ENCODE measurements at regions of chr2 and their contacts with region 1.

Region 1: DNA sequence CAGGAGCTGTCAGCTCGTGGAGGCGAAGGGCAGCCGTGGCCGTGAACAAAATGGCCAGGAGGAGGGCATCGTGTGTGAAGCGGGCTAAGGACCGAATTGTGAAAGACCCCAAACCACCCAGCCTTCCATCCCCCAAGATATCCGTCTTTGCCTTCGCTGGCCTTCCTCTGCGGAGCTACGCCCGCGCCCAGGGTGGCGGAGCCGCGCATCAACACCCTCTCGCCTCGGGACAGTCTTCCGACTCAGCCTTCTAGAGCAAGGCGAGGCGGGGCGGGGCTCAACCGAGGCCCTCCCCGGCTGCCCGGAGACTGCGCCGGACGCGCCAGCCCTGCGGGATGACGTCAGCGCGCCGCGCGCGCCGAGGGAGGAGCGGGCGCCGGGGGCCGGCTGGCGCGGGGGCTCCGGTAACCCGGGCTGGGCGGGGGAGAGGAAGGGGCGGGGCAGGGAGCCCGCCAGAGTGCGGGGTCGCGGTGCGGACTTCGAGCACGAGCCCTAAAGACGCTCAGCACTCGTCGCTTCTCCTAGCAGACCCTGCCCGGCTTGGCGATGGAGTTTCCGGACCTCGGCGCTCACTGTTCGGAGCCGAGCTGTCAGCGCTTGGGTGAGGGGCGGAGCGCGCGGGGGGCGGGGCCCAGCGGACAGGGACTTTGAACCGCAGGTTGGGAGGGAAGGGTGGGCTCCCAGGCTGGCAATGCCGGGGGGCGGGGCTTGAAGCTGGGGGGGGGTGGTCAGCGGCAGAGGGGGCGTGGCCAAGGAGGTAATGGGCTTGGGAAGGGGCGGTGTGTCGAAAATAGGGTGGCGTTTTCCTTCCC is at the start of gene ZFAND2B:
- DNase-seq: peak; percentile 93
- H3K4me3 Mint-ChIP-seq: peak within 1 kb of the TSS; percentile 88
- H3K27ac Mint-ChIP-seq: peak within 1 kb of the TSS; percentile 94
- H3K4me1 Mint-ChIP-seq: peaks cover 15% of the 10 kb centered on the region
- H3K27me3 Mint-ChIP-seq: no peaks in the 10 kb centered on the region
- CTCF ChIP-seq: no peak
- total RNA-seq, gene ZFAND2B: 61.0 and 73.1 TPM in 2 replicates

Region 2: GRCh38 chr2:219057709-219058540 is 148.7 kb before region 1 on chr2:
- CTCF ChIA-PET with region 1: no interaction called
- POLR2A ChIA-PET with region 1: no interaction called
- intact Hi-C with region 1: no loop called
- DNase-seq: peak; percentile 51
- H3K4me3 Mint-ChIP-seq: no peak overlapping the region
- H3K27ac Mint-ChIP-seq: no peak overlapping the region
- H3K4me1 Mint-ChIP-seq: no peaks in the 10 kb centered on the region
- H3K27me3 Mint-ChIP-seq: peaks cover 63% of the 10 kb centered on the region
- CTCF ChIP-seq: peak; percentile 95

Region 3: DNA sequence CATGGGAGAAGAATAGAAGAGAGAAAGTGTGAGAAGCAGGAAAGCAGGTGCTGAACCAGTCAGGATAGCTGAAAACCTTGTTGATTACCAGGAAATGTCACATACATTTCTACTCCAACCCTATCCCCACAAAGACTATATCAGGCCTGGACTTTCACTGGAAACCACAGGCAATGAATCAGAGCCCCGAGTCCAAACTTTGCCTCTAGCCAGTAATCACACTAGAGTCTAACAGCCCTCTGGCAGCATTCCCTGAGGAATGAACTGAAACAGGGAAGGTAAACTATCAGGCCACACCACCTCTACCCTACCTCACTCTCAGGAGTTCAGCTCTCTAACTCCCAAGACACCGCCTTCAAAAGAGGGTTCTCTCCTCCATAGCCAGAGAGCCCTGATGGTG is 127.2 kb before region 1 on chr2:
- CTCF ChIA-PET with region 1: no interaction called
- POLR2A ChIA-PET with region 1: no interaction called
- intact Hi-C with region 1: no loop called
- DNase-seq: peak; percentile 8
- H3K4me3 Mint-ChIP-seq: no peak overlapping the region
- H3K27ac Mint-ChIP-seq: no peak overlapping the region
- H3K4me1 Mint-ChIP-seq: no peaks in the 10 kb centered on the region
- H3K27me3 Mint-ChIP-seq: no peaks in the 10 kb centered on the region
- CTCF ChIP-seq: no peak

Region 4: DNA sequence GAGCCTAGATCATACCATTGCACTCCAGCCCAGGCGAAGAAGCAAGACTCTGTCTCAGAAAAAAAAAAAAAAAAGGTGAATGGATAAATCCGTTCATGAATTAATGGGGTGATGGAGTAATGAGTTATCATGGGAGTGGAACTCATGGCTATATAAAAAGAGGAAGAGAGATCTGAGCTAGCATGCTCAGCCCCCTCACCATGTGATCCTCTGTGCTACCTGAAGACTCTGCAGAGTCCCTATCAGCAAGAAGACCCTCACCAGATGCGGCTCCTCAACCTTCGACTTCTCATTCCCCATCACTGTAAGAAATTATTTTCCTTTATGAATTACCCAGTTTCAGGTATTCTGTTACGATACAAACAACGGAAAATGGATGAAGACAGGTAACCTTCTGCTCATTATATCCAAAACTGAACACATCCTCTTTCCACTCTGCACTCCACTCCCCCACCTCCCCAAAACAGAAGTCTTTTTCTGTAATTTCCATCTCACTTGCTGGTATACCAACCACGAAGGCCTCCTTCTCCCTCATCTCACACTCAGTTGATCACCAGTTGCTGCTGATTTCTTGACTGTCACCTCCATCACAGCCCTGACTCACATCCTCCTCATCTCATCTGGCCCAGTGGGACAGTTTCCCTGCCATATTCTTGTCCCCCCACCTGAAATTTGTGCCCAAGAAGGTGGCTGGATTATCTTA is 19.7 kb before region 1 on chr2:
- CTCF ChIA-PET with region 1: no interaction called
- POLR2A ChIA-PET with region 1: interaction called, 35 read pairs
- intact Hi-C with region 1: no loop called
- DNase-seq: no peak
- H3K4me3 Mint-ChIP-seq: no peak overlapping the region
- H3K27ac Mint-ChIP-seq: no peak overlapping the region
- H3K4me1 Mint-ChIP-seq: no peaks in the 10 kb centered on the region
- H3K27me3 Mint-ChIP-seq: no peaks in the 10 kb centered on the region
- CTCF ChIP-seq: no peak

Region 5: DNA sequence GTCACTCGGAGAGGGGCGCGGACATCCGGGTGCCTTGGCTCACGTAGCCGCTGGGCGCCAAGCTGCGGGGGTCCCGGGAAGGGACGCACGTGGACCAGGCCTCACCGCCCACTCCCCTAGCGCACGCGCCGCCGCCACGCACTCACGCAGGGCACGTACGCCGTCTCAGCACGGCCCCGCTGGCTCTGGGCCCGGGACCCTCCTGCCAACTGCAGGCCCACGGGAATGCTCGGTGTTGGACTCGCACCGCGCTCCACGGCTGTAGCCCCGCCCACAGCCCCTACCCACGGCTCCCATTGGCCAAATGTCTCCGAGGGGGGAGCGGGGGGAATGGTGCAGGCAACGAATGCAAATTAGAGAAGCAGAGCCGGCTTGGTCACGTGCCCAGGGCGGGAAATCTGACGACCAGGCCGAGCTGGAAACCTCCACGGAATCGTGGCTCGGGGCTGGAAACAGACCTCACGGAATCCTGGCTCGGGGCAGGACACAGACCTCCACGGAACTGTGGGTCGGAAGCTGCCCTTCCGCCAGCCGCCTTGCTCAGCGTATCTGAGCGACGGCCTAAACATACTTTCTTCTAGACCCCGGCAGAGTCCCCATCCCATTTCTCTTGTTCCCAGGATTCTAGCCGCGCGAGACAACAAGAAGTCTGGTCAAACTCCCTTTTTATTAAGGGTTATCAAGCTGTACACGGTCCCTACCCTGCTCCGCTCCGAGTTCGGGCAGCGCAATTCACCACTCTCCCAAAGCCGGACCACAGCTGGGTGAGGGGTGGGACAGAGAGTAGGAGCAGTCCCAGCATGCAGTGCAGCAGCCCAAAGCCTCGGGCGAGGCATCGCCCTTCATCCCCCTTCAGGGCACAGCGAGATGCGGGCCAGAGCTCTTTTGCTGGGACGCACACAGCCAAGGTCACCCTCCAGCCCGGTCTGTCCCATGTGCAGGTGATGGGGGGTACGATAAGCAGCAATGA is 12.4 kb after region 1 on chr2 and contains the start of gene ABCB6:
- CTCF ChIA-PET with region 1: no interaction called
- POLR2A ChIA-PET with region 1: interaction called, 60 read pairs
- intact Hi-C with region 1: no loop called
- DNase-seq: peak; percentile 91
- H3K4me3 Mint-ChIP-seq: peak within 1 kb of the TSS; percentile 82
- H3K27ac Mint-ChIP-seq: peak within 1 kb of the TSS; percentile 83
- H3K4me1 Mint-ChIP-seq: no peaks in the 10 kb centered on the region
- H3K27me3 Mint-ChIP-seq: no peaks in the 10 kb centered on the region
- CTCF ChIP-seq: no peak
- total RNA-seq, gene ABCB6: 13.8 and 18.8 TPM in 2 replicates